ENCODE measurements at regions of chr2 and their contacts with region 1.

Region 1: GRCh38 chr2:149597668-149598326 is 10.2 kb upstream of the MMADHC start:
- DNase-seq: peak; percentile 57
- ATAC-seq: peak; percentile 89
- H3K4me3 ChIP-seq: no peak overlapping the region
- H3K27ac ChIP-seq: no peak overlapping the region
- H3K4me1 ChIP-seq: no peaks in the 10 kb centered on the region
- H3K27me3 ChIP-seq: no peaks in the 10 kb centered on the region
- CTCF ChIP-seq: peak; percentile 94
- EP300 ChIP-seq: no peak
- POLR2A ChIP-seq: no peak
- RAD21 ChIP-seq: peak; percentile 79

Region 2: GRCh38 chr2:149715005-149715592 is 117.3 kb after region 1 on chr2:
- CTCF ChIA-PET with region 1: interaction called, 9 read pairs
- POLR2A ChIA-PET with region 1: no interaction called
- in situ Hi-C with region 1: loop called (anchors 10 kb)
- intact Hi-C with region 1: loop called (anchors 1 kb)
- DNase-seq: peak; percentile 12
- ATAC-seq: peak; percentile 98
- H3K4me3 ChIP-seq: no peak overlapping the region
- H3K27ac ChIP-seq: no peak overlapping the region
- H3K4me1 ChIP-seq: 0 out of 2 replicates have a peak, but pooled peaks cover 5% of the 10 kb centered on the region
- H3K27me3 ChIP-seq: no peaks in the 10 kb centered on the region
- CTCF ChIP-seq: peak; percentile 62
- EP300 ChIP-seq: no peak
- POLR2A ChIP-seq: no peak
- RAD21 ChIP-seq: 0 out of 2 replicates have a peak, but pooled peaks have one; percentile 26

Region 3: DNA sequence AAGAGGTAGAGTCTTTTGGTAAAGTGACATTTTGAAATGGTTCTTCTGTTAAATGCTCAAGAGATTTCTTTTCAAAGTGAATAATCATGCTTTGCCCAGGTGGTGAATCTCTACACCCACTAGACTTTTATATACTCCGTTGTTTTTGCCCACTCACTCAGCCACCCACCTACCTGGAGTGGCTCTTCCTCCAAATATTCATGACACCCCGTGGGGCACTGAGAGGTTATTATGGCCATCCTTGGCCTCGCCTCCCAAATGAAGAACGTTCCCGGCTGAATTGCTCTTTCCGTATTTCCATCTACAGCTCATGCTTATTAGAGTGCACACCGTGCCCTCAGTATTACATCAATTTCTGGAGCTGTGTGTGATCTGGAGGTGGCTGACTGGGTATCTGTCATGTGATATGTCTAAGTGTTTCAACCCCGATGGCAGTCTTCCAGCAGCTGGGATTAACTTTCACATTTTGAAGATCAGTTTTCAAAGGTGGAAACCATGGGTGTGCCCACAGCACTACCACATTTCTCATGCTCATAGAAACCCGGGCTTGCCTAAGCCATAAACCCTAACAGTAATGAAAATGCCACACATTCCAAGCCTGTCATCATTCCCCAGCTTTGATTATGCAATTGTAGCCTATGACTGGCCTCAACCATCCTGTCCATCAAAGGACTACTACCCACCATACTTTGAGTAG is 396.4 kb after region 1 on chr2:
- CTCF ChIA-PET with region 1: no interaction called
- POLR2A ChIA-PET with region 1: no interaction called
- in situ Hi-C with region 1: no loop called
- intact Hi-C with region 1: loop called (anchors 10 kb)
- DNase-seq: peak; percentile 12
- ATAC-seq: no peak
- H3K4me3 ChIP-seq: no peak overlapping the region
- H3K27ac ChIP-seq: no peak overlapping the region
- H3K4me1 ChIP-seq: peaks cover 9% of the 10 kb centered on the region
- H3K27me3 ChIP-seq: no peaks in the 10 kb centered on the region
- CTCF ChIP-seq: no peak
- EP300 ChIP-seq: no peak
- POLR2A ChIP-seq: no peak
- RAD21 ChIP-seq: no peak

Region 4: DNA sequence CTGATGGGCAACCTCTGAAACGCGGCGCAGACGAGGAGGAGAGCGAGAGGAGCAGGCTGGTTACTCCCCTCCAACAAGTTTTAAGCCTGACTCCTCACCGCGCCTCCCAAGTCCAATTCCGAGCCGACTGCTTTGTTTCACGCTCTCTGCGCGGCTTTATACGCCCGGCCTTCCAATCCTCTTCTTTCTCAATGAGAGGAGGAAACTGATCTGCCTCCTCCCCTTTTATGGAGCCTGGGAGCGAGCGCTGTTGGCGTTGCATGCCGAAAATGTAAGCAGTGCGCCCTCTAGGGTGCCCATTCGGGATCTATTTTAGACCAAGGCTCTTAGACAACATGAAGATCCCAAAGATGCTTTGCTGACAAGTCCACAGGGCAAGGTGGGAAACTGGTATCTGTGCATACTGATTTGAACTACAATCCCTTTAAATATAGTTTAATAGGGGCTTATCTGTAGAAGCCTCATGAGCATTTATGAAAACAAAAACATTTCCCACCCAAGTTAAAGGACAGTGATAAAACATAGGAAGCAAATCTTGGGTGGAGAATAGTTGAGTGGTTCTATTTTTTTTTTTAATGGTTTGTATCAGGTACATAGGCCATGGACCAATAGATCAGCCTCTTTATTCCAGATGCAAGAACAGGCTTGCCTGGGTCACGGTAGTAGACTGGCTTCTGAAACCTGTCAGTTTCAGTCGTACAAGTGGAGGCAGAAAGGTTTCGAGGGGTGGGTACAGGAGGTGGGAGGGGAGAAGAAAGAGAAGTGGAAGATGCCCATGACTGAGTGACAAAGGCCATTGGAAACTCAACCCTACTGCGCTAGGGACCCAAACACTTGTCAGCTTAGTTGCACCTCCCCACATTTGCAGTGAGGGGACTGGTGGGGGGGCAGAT is 890.0 kb after region 1 on chr2 and contains the start of gene RND3:
- CTCF ChIA-PET with region 1: interaction called, 19 read pairs
- POLR2A ChIA-PET with region 1: no interaction called
- in situ Hi-C with region 1: loop called (anchors 5 kb)
- intact Hi-C with region 1: loop called (anchors 1 kb)
- DNase-seq: peak; percentile 87
- ATAC-seq: peak; percentile 85
- H3K4me3 ChIP-seq: peak within 1 kb of the TSS; percentile 40 to 56 (median 43); a peak in 4 of 6 replicates
- H3K27ac ChIP-seq: no peak within 1 kb of the TSS
- H3K4me1 ChIP-seq: peaks cover 21% of the 10 kb centered on the region
- H3K27me3 ChIP-seq: peaks cover 6 to 31% of the 10 kb centered on the region in 2 experiments; a peak in 4 of 5 replicates
- CTCF ChIP-seq: peak; percentile 93
- EP300 ChIP-seq: no peak
- POLR2A ChIP-seq: no peak
- RAD21 ChIP-seq: peak; percentile 80
- total RNA-seq, gene RND3: 0.13 and 0.73 TPM in 2 replicates

Region 5: GRCh38 chr2:150610671-150611279 is 1013.0 kb after region 1 on chr2:
- CTCF ChIA-PET with region 1: interaction called, 8 read pairs
- POLR2A ChIA-PET with region 1: no interaction called
- in situ Hi-C with region 1: loop called (anchors 5 kb)
- intact Hi-C with region 1: loop called (anchors 1 kb)
- DNase-seq: peak; percentile 19
- ATAC-seq: peak; percentile 90
- H3K4me3 ChIP-seq: no peak overlapping the region
- H3K27ac ChIP-seq: no peak overlapping the region
- H3K4me1 ChIP-seq: no peaks in the 10 kb centered on the region
- H3K27me3 ChIP-seq: no peaks in the 10 kb centered on the region
- CTCF ChIP-seq: peak; percentile 71
- EP300 ChIP-seq: no peak
- POLR2A ChIP-seq: no peak
- RAD21 ChIP-seq: no peak

Region 6: DNA sequence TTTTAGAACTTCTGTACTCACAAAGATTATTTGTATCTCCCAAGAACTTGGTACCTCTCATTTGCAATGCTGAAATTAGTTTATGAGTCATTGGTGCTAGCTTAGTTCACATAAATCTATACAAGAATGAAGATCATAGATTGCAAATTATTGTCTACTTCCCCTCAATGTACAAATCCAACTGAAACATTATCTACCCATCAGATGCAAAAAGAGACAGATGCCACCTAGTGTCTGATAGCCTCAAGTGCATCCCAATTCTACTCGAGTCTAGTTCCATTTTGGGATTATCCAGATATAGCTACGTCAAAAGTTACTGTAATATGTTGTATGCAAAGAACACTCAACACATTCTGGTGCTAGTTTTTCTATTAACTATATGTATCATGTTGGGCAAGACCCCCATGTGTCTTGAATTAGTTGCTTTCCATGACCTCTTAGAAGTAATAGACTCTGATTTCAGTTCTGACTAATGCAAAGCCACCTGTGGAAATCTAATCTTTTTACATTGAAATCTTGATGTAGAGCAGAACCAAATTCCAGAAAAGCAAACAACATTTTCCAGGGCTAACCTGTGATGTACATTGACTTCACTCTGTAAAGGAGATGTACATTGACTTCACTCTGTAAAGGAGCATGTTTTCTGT is 1453.9 kb after region 1 on chr2:
- CTCF ChIA-PET with region 1: interaction called, 5 read pairs
- POLR2A ChIA-PET with region 1: no interaction called
- in situ Hi-C with region 1: loop called (anchors 10 kb)
- intact Hi-C with region 1: loop called (anchors 1 kb)
- DNase-seq: peak; percentile 35
- ATAC-seq: peak; percentile 83
- H3K4me3 ChIP-seq: no peak overlapping the region
- H3K27ac ChIP-seq: no peak overlapping the region
- H3K4me1 ChIP-seq: no peaks in the 10 kb centered on the region
- H3K27me3 ChIP-seq: no peaks in the 10 kb centered on the region
- CTCF ChIP-seq: peak; percentile 77
- EP300 ChIP-seq: no peak
- POLR2A ChIP-seq: no peak
- RAD21 ChIP-seq: no peak

Region 7: GRCh38 chr2:151238527-151239487 is 1641.0 kb after region 1 on chr2:
- CTCF ChIA-PET with region 1: no interaction called
- POLR2A ChIA-PET with region 1: no interaction called
- in situ Hi-C with region 1: loop called (anchors 10 kb)
- intact Hi-C with region 1: loop called (anchors 2 kb)
- DNase-seq: peak; percentile 57
- ATAC-seq: peak; percentile 91
- H3K4me3 ChIP-seq: no peak overlapping the region
- H3K27ac ChIP-seq: no peak overlapping the region
- H3K4me1 ChIP-seq: no peaks in the 10 kb centered on the region
- H3K27me3 ChIP-seq: 0 out of 5 replicates have a peak, but pooled peaks cover 0 to 6% of the 10 kb centered on the region in 2 experiments
- CTCF ChIP-seq: peak; percentile 82
- EP300 ChIP-seq: no peak
- POLR2A ChIP-seq: no peak
- RAD21 ChIP-seq: peak; percentile 83

Measured in HepG2 (cell line).